ENCODE measurements at regions of chr12 and their contacts with region 1.

Region 1: GRCh38 chr12:31659087-31659933 is at the start of gene ETFBKMT:
- DNase-seq: peak; percentile 96
- H3K4me3 Mint-ChIP-seq: peak within 1 kb of the TSS; percentile 93
- H3K27ac Mint-ChIP-seq: peak within 1 kb of the TSS; percentile 94
- H3K4me1 Mint-ChIP-seq: peaks cover 3% of the 10 kb centered on the region
- H3K27me3 Mint-ChIP-seq: no peaks in the 10 kb centered on the region
- CTCF ChIP-seq: no peak
- total RNA-seq, gene ETFBKMT: 3.0 and 3.3 TPM in 2 replicates

Region 2: DNA sequence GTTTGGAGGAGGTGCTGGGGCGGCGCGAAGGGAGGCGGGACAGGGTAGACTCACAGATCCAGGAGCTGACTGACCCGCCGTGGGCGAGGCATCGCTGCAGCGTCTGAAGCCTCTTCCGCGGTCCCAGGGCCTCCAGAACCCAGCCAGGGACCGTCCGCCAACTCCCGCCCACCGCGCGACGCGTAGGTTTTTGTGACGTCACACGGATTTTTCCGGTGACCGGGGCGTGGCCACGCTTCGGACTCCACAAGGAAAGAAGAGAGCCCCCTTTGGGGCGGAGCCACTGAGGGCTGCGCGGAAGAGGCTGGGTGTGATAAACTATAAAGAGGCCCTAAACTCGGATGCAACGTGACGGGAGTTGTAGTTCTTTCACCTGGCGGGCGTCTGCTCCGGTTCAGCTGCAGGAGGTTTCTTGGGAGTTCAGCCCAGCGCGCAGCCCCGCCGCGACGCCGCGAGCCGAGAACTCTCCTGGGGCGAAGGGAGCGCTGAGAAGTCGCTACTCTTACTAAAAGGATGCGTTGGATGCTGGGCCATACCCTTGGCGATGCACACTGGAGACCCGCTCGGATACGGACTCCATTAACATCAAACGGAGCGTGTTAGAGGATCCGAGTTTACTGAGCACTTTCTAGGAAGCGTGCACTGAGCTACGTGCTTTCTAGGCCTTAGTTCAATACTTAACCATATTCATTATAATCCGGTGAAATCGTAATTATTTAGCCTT is 69.8 kb after region 1 on chr12 and contains the start of gene AMN1:
- CTCF ChIA-PET with region 1: no interaction called
- POLR2A ChIA-PET with region 1: interaction called, 10 read pairs
- intact Hi-C with region 1: no loop called
- DNase-seq: peak; percentile 94
- H3K4me3 Mint-ChIP-seq: peak within 1 kb of the TSS; percentile 84
- H3K27ac Mint-ChIP-seq: peak within 1 kb of the TSS; percentile 76
- H3K4me1 Mint-ChIP-seq: peaks cover 14% of the 10 kb centered on the region
- H3K27me3 Mint-ChIP-seq: no peaks in the 10 kb centered on the region
- CTCF ChIP-seq: no peak
- total RNA-seq, gene AMN1: 3.0 and 5.6 TPM in 2 replicates

Region 3: GRCh38 chr12:32051559-32052414 is 392.5 kb after region 1 on chr12:
- CTCF ChIA-PET with region 1: no interaction called
- POLR2A ChIA-PET with region 1: no interaction called
- intact Hi-C with region 1: loop called (anchors 10 kb)
- DNase-seq: peak; percentile 92
- H3K4me3 Mint-ChIP-seq: no peak overlapping the region
- H3K27ac Mint-ChIP-seq: peak overlapping the region; percentile 47
- H3K4me1 Mint-ChIP-seq: peaks cover 7% of the 10 kb centered on the region
- H3K27me3 Mint-ChIP-seq: no peaks in the 10 kb centered on the region
- CTCF ChIP-seq: no peak

Region 4: DNA sequence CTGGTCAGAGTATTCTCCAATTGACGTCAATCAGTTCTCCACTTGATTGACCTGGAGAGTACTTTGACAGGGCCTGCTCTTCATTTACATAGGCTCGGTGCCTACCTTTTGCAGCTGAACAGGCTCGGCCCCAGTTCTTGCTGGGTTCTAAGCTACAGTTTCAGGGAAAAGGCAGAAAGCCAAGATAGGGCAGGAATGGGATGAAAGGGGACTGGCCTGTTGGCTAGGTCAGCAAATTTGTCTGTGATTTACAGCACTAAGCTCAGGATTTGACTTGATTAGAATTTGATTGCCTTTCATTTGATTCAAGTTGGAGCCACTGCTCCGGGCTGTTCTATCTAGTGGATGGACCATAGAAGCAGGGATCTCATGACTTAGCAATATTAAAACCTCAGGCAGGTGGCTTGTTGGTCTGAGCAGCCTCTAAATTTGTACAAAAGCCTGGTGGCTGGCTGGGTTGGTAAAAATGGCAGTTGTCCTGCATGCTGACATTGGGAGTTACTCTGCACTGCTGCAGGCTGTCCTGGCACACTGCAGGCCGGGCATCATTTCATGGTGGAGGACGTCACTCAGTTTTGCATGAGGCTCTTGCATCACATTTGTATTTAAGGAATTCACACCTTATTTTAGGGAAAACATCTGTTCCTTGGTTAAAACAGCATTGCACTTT is 519.2 kb after region 1 on chr12:
- CTCF ChIA-PET with region 1: no interaction called
- POLR2A ChIA-PET with region 1: no interaction called
- intact Hi-C with region 1: no loop called
- DNase-seq: no peak
- H3K4me3 Mint-ChIP-seq: no peak overlapping the region
- H3K27ac Mint-ChIP-seq: no peak overlapping the region
- H3K4me1 Mint-ChIP-seq: no peaks in the 10 kb centered on the region
- H3K27me3 Mint-ChIP-seq: no peaks in the 10 kb centered on the region
- CTCF ChIP-seq: no peak

Measured in MCF 10A (cell line).